HepG2 (cell line): ENCODE measurements at regions of chr1 and their contacts with region 1.

Region 1: DNA sequence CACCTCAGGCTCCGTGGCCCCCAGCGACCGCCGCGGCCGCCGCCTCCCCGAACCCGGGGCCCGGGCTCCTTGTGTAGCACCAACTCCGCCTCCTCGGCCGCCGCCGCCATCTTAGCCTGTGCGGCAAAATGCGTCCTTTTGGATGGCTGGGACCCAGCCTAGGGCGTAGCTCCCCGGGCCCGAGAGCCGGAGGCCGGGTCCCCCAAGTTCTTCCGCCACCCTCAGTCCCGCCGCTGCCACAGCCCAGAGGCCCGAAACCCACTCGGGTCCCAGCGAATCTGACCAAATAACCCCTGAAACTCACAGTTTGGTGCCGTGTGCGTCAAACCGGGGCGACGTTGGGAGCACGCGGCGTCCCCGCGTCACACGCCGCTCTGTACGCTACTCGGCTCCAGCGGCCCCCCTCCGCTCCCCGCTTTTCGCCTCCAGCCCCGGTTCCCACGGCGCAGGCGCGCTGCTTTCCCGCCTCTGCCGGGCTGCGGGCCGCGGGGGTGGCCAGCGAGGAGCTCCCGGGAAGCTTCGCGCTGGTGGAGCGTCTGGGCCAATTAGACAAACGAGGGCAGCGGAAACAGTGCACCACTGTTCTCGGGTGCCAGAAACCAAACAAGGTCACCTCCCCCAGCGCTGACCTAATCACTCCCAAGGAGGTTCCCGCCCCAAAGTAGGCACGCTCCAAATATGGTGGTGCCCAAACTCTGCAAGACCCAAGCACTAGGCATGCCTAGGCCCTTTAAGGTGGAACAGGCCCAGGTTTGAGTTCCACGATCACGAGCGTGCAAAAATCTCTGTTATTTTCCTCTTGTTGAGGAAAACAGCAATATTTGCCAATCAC is at the start of gene ZNF644:
- DNase-seq: peak; percentile 92
- ATAC-seq: peak; percentile 89
- H3K4me3 ChIP-seq: peak within 1 kb of the TSS; percentile 77 to 95 (median 92)
- H3K27ac ChIP-seq: peak within 1 kb of the TSS; percentile 100
- H3K4me1 ChIP-seq: peaks cover 68% of the 10 kb centered on the region
- H3K27me3 ChIP-seq: no peaks in the 10 kb centered on the region; a peak in 1 of 5 replicates
- CTCF ChIP-seq: no peak
- EP300 ChIP-seq: no peak
- POLR2A ChIP-seq: peak; percentile 65 to 83; a peak in 3 of 4 replicates
- RAD21 ChIP-seq: peak; percentile 16; the same call in 1 of the 2 replicates
- total RNA-seq, gene ZNF644: 51.7 and 66.7 TPM in 2 replicates

Region 2: GRCh38 chr1:90862782-90863181 is 159.1 kb before region 1 on chr1:
- CTCF ChIA-PET with region 1: no interaction called
- POLR2A ChIA-PET with region 1: no interaction called
- in situ Hi-C with region 1: no loop called
- intact Hi-C with region 1: no loop called
- DNase-seq: no peak
- ATAC-seq: no peak
- H3K4me3 ChIP-seq: no peak overlapping the region
- H3K27ac ChIP-seq: no peak overlapping the region
- H3K4me1 ChIP-seq: no peaks in the 10 kb centered on the region
- H3K27me3 ChIP-seq: no peaks in the 10 kb centered on the region
- CTCF ChIP-seq: no peak
- EP300 ChIP-seq: no peak
- POLR2A ChIP-seq: no peak
- RAD21 ChIP-seq: no peak

Region 3: GRCh38 chr1:90899263-90899662 is 122.6 kb before region 1 on chr1:
- CTCF ChIA-PET with region 1: no interaction called
- POLR2A ChIA-PET with region 1: no interaction called
- in situ Hi-C with region 1: no loop called
- intact Hi-C with region 1: no loop called
- DNase-seq: no peak
- ATAC-seq: no peak
- H3K4me3 ChIP-seq: no peak overlapping the region
- H3K27ac ChIP-seq: no peak overlapping the region
- H3K4me1 ChIP-seq: no peaks in the 10 kb centered on the region
- H3K27me3 ChIP-seq: no peaks in the 10 kb centered on the region
- CTCF ChIP-seq: no peak
- EP300 ChIP-seq: no peak
- POLR2A ChIP-seq: no peak
- RAD21 ChIP-seq: no peak

Region 4: GRCh38 chr1:91007827-91008226 is 14.1 kb before region 1 on chr1:
- CTCF ChIA-PET with region 1: no interaction called
- POLR2A ChIA-PET with region 1: interaction called, 19 read pairs
- in situ Hi-C with region 1: no loop called
- intact Hi-C with region 1: no loop called
- DNase-seq: no peak
- ATAC-seq: peak; percentile 34; the same call in 2 of the 3 replicates
- H3K4me3 ChIP-seq: no peak overlapping the region
- H3K27ac ChIP-seq: no peak overlapping the region
- H3K4me1 ChIP-seq: peaks cover 27% of the 10 kb centered on the region
- H3K27me3 ChIP-seq: no peaks in the 10 kb centered on the region
- CTCF ChIP-seq: no peak
- EP300 ChIP-seq: no peak
- POLR2A ChIP-seq: no peak
- RAD21 ChIP-seq: no peak

Region 5: GRCh38 chr1:91054780-91055481 is 33.0 kb after region 1 on chr1:
- CTCF ChIA-PET with region 1: no interaction called
- POLR2A ChIA-PET with region 1: no interaction called
- in situ Hi-C with region 1: no loop called
- intact Hi-C with region 1: no loop called
- DNase-seq: no peak
- ATAC-seq: no peak
- H3K4me3 ChIP-seq: no peak overlapping the region
- H3K27ac ChIP-seq: no peak overlapping the region
- H3K4me1 ChIP-seq: no peaks in the 10 kb centered on the region
- H3K27me3 ChIP-seq: no peaks in the 10 kb centered on the region
- CTCF ChIP-seq: no peak
- EP300 ChIP-seq: no peak
- POLR2A ChIP-seq: no peak
- RAD21 ChIP-seq: no peak